AG04450 (cell line): ENCODE measurements at regions of chr7 and their contacts with region 1.

Region 1: DNA sequence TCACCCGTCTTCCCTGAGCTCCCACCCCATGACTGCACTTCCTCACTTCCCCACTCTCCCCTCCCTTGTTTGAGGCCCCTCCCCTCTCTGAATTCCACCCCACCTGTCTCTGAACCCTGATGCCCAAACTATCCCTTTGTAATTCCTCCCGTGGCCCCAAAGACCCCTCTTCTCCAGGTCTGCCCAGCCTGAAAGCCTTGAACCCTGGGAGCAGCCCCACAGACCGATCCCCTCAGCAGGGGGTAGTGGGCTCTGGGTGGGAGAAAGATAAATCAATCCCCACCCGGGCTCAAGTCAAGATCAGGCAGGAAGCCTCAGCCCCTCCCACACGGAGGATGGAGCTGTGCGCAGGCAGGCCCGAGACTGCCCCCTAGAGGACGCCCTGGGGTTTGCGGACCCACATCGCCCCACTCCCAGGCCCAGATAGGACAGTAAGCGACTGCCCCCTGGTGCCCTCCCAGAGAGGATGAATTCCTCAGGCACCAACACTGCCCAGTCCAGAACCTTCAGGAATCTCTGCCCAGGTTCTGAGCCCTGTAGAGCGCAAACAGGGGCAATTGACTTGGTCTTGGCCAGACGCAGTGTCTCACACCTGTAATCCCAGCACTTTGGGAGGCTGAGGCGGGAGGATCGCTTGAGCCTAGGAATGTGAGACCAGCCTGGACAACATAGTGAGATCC is 11.7 kb downstream of the HSPB1 start:
- DNase-seq: peak; percentile 84
- H3K4me3 ChIP-seq: no peak overlapping the region
- H3K27ac ChIP-seq: no peak overlapping the region
- H3K27me3 ChIP-seq: no peaks in the 10 kb centered on the region
- CTCF ChIP-seq: peak; percentile 100

Region 2: GRCh38 chr7:76262683-76263402 is 51.3 kb before region 1 on chr7:
- CTCF ChIA-PET with region 1: interaction called, 30 read pairs
- POLR2A ChIA-PET with region 1: no interaction called
- DNase-seq: peak; percentile 16
- H3K4me3 ChIP-seq: no peak overlapping the region
- H3K27ac ChIP-seq: no peak overlapping the region
- H3K27me3 ChIP-seq: peaks cover 32% of the 10 kb centered on the region
- CTCF ChIP-seq: peak; percentile 77

Region 3: DNA sequence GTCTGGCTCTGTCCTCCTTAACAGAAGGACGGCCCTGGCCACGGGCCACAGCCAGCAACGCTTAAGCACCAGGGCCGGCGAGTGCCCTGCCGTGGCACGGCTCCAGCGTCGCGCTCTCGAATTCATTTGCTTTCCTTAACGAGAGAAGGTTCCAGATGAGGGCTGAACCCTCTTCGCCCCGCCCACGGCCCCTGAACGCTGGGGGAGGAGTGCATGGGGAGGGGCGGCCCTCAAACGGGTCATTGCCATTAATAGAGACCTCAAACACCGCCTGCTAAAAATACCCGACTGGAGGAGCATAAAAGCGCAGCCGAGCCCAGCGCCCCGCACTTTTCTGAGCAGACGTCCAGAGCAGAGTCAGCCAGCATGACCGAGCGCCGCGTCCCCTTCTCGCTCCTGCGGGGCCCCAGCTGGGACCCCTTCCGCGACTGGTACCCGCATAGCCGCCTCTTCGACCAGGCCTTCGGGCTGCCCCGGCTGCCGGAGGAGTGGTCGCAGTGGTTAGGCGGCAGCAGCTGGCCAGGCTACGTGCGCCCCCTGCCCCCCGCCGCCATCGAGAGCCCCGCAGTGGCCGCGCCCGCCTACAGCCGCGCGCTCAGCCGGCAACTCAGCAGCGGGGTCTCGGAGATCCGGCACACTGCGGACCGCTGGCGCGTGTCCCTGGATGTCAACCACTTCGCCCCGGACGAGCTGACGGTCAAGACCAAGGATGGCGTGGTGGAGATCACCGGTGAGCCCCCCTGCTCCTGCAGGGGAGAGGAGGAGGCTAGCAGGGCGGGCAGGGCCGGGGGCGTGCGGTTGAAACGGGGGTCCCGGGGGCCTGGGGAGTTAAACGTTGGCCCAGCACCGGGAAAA is 11.6 kb before region 1 on chr7 and contains the start of gene HSPB1:
- CTCF ChIA-PET with region 1: interaction called, 9 read pairs
- POLR2A ChIA-PET with region 1: interaction called, 19 read pairs
- DNase-seq: peak; percentile 69
- H3K4me3 ChIP-seq: peak within 1 kb of the TSS; percentile 97
- H3K27ac ChIP-seq: peak within 1 kb of the TSS; percentile 75
- H3K27me3 ChIP-seq: no peaks in the 10 kb centered on the region
- CTCF ChIP-seq: no peak
- polyA plus RNA-seq, gene HSPB1: 290 and 526 TPM in 2 replicates

Region 4: DNA sequence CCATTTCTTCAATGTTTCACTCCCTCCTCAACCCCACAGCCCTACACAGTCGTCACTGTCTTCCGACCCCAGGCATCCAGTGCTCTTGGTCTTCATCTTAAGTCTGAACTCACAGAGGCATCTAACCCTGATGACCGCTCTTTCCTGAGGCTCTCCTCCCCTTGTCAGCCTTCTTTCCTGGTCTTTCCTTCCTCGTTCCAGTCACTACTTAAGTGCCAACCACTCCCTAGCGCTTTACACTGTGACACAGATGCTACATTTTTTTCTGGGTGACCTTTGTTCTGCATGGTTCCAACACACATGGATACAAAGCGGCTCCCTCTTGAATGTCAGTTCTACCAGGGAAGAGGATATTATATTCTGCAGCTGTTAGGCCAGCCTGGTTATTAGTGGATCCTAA is 31.9 kb after region 1 on chr7:
- CTCF ChIA-PET with region 1: no interaction called
- POLR2A ChIA-PET with region 1: no interaction called
- DNase-seq: no peak
- H3K4me3 ChIP-seq: no peak overlapping the region
- H3K27ac ChIP-seq: no peak overlapping the region
- H3K27me3 ChIP-seq: no peaks in the 10 kb centered on the region
- CTCF ChIP-seq: no peak